CD4-positive, alpha-beta memory T cell (primary cell): ENCODE measurements at regions of chr15 and their contacts with region 1.

Region 1: GRCh38 chr15:45705510-45706473 is 71.0 kb downstream of the SQOR start:
- DNase-seq: peak; percentile 66 to 73 (median 68)
- H3K4me3 ChIP-seq: peak overlapping the region; percentile 24 to 73
- H3K4me3 Mint-ChIP-seq: peak overlapping the region; percentile 91 to 98 (median 94)
- H3K27ac ChIP-seq: no peak overlapping the region
- H3K27ac Mint-ChIP-seq: peak overlapping the region in 6 of 7 donors; percentile 54 to 87 (median 66)
- H3K4me1 ChIP-seq: peaks cover 8% of the 10 kb centered on the region
- H3K4me1 Mint-ChIP-seq: peaks cover 10 to 15% (median 12%) of the 10 kb centered on the region in 4 donors
- H3K27me3 ChIP-seq: no peaks in the 10 kb centered on the region
- H3K27me3 Mint-ChIP-seq: peaks cover 0 to 3% of the 10 kb centered on the region in 2 donors

Region 2: GRCh38 chr15:45634442-45635190 is 71.2 kb before region 1 on chr15 and contains the start of gene SQOR:
- CTCF ChIA-PET with region 1: interaction called, 31 read pairs
- POLR2A ChIA-PET with region 1: interaction called, 14 read pairs
- intact Hi-C with region 1: loop called (anchors 2 kb)
- DNase-seq: peak; percentile 63 to 71 (median 67)
- H3K4me3 ChIP-seq: peak within 1 kb of the TSS; percentile 76 to 90
- H3K4me3 Mint-ChIP-seq: peak within 1 kb of the TSS; percentile 88 to 99 (median 98)
- H3K27ac ChIP-seq: peak within 1 kb of the TSS; percentile 67
- H3K27ac Mint-ChIP-seq: peak within 1 kb of the TSS; percentile 90 to 96 (median 95)
- H3K4me1 ChIP-seq: peaks cover 45% of the 10 kb centered on the region
- H3K4me1 Mint-ChIP-seq: peaks cover 26 to 53% (median 41%) of the 10 kb centered on the region in 4 donors
- H3K27me3 ChIP-seq: no peaks in the 10 kb centered on the region
- H3K27me3 Mint-ChIP-seq: no peaks in the 10 kb centered on the region
- total RNA-seq, gene SQOR: 47.9 to 51.0 TPM

Region 3: DNA sequence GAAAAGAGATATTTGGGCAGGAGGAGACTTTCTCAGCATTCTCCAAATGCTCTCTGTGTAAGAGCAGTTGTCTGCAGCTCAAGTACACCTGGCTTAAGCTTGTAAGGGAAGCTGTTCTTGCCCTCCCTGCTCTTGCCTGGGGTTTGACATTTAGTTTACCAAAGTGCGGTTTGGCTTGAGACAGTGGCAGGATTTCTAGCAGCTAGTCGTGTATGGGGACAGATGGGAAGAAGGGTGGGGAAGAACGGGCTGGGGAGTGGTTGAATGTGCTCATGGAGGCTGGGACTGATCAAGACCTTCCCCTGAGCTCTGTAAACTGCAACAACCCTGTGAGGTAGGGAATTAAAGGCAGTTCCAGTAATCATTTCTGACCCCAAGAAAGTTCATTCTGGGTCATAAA is 31.1 kb before region 1 on chr15:
- CTCF ChIA-PET with region 1: interaction called, 20 read pairs
- POLR2A ChIA-PET with region 1: no interaction called
- intact Hi-C with region 1: no loop called
- DNase-seq: no peak
- H3K4me3 ChIP-seq: no peak overlapping the region
- H3K4me3 Mint-ChIP-seq: no peak overlapping the region
- H3K27ac ChIP-seq: no peak overlapping the region
- H3K27ac Mint-ChIP-seq: peak overlapping the region in 4 of 7 donors; percentile 46 to 70 (median 58)
- H3K4me1 ChIP-seq: no peaks in the 10 kb centered on the region
- H3K4me1 Mint-ChIP-seq: peaks cover 0 to 7% (median 1%) of the 10 kb centered on the region in 4 donors
- H3K27me3 ChIP-seq: no peaks in the 10 kb centered on the region
- H3K27me3 Mint-ChIP-seq: no peaks in the 10 kb centered on the region

Region 4: DNA sequence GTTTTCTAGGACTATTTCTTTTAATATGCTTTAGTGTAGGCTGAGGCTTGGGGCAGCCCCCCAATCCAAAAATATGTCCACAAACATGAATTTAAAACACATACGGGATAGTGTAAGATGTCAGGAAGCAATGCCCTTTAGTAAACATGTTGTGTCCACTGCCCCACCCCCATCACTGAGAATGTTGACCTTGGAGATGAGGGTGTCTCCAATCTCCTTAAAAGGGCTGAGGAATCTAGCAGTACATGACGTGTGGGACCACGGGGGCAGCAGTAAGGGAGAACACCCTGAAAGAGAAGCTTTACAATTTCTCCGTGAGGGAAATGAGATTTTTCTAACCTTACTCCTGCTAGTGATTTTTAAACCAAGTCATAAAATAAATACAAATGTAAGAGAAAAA is 13.7 kb after region 1 on chr15:
- CTCF ChIA-PET with region 1: interaction called, 16 read pairs
- POLR2A ChIA-PET with region 1: no interaction called
- intact Hi-C with region 1: no loop called
- DNase-seq: no peak
- H3K4me3 ChIP-seq: no peak overlapping the region
- H3K4me3 Mint-ChIP-seq: no peak overlapping the region
- H3K27ac ChIP-seq: no peak overlapping the region
- H3K27ac Mint-ChIP-seq: no peak overlapping the region
- H3K4me1 ChIP-seq: no peaks in the 10 kb centered on the region
- H3K4me1 Mint-ChIP-seq: peaks cover 0 to 2% (median 1%) of the 10 kb centered on the region in 4 donors
- H3K27me3 ChIP-seq: no peaks in the 10 kb centered on the region
- H3K27me3 Mint-ChIP-seq: peaks cover 20 to 22% of the 10 kb centered on the region in 2 donors

Region 5: DNA sequence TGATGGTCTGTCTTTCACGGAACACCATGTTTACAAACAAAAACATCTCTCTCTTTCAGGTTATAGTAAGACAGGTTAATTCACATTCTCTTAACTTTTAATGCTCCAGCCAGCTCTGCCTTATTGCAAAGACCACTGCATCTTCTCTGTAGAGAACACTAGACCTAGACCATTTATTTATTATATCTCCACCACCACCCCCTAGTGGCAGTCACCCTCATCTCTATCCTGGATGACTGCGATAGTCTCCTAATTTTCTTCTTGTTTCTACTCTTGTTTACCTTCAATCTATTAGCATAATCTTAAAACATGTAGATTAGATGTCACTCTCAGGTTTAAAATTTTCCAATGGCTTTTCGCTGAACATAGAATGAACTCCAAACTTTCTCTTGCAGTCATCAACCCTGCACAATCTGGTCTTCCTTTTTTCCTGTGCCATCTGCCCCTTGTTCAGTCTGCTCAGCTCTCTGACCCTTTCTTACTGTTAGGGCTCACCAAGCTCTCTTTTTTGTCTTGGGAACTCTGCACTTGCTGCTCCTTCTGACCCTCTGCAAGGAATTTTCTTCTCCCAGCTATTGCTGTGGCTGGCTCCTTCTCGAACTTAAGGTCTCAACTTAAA is 84.6 kb after region 1 on chr15:
- CTCF ChIA-PET with region 1: no interaction called
- POLR2A ChIA-PET with region 1: no interaction called
- intact Hi-C with region 1: no loop called
- DNase-seq: no peak
- H3K4me3 ChIP-seq: no peak overlapping the region
- H3K4me3 Mint-ChIP-seq: no peak overlapping the region
- H3K27ac ChIP-seq: no peak overlapping the region
- H3K27ac Mint-ChIP-seq: no peak overlapping the region
- H3K4me1 ChIP-seq: no peaks in the 10 kb centered on the region
- H3K4me1 Mint-ChIP-seq: no peaks in the 10 kb centered on the region
- H3K27me3 ChIP-seq: no peaks in the 10 kb centered on the region
- H3K27me3 Mint-ChIP-seq: peaks cover 7 to 9% of the 10 kb centered on the region in 2 donors